HCT116 (cell line): ENCODE measurements at regions of chr1 and their contacts with region 1.

Region 1: GRCh38 chr1:53889304-53890298 is at the start of gene YIPF1:
- DNase-seq: peak; percentile 74
- ATAC-seq: peak; percentile 99
- H3K4me3 ChIP-seq: peak within 1 kb of the TSS; percentile 86 to 92
- H3K27ac ChIP-seq: peak within 1 kb of the TSS; percentile 36
- H3K4me1 ChIP-seq: peaks cover 8 to 23% of the 10 kb centered on the region in 2 experiments
- H3K27me3 ChIP-seq: no peaks in the 10 kb centered on the region
- CTCF ChIP-seq: no peak
- POLR2A ChIP-seq: no peak
- RAD21 ChIP-seq: no peak
- total RNA-seq, gene YIPF1: 16.4 TPM

Region 2: DNA sequence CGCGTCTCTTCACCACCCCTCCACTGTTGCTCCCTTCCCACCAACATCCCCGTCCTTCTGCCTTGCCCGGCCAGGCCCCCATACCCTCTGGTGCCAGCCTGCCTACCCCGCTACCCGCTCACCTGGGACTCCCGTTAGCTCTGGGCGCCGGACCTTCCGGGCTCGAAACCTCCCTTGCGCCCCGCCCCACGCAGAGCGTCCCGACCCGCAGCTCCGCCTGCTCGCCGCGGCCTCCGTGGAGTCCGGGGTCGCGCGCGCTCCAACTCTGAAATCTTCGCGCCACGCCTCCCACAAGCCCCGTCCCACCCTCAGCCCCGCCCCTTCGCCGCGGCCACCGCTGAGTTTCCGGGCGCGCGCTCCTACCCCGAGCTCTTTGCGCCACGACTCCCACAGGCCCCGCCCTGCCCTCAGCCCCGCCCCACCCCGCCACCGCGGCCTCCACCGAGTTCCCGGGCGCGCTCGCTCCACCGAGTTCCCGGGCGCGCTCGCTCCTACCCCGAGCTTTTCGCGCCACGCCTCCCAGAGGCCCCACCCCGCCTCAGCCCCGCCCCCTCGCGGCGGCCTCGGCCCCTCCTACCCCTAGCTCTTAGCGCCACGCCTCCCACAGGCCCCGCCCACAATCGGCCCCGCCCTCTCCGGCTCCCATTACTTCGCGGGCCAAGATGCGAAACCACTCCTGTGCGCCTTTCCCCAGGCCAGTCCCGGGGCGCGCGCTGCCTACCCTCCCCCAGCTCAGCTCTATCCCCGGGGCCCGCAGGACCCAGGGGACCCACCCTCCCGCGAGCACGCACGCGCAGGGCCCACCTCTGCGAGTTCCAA is 56.0 kb after region 1 on chr1 and contains the start of gene IFT25:
- CTCF ChIA-PET with region 1: interaction called, 8 read pairs
- POLR2A ChIA-PET with region 1: no interaction called
- RAD21 ChIA-PET with region 1: interaction called in 1 of 2 experiments, 3 read pairs
- intact Hi-C with region 1: loop called (anchors 2 kb)
- DNase-seq: peak; percentile 88
- ATAC-seq: peak; percentile 84
- H3K4me3 ChIP-seq: peak within 1 kb of the TSS; percentile 83 to 87
- H3K27ac ChIP-seq: peak within 1 kb of the TSS; percentile 73
- H3K4me1 ChIP-seq: peaks cover 10 to 30% of the 10 kb centered on the region in 2 experiments; a peak in 3 of 4 replicates
- H3K27me3 ChIP-seq: no peaks in the 10 kb centered on the region
- CTCF ChIP-seq: no peak
- POLR2A ChIP-seq: peak; percentile 60
- RAD21 ChIP-seq: no peak
- total RNA-seq, gene IFT25: 45.1 TPM